H1 (cell line): ENCODE measurements at regions of chr11 and their contacts with region 1.

Region 1: GRCh38 chr11:14454861-14455632 is 44.6 kb downstream of the COPB1 start:
- DNase-seq: peak in 1 of 2 experiments; percentile 52
- H3K4me3 ChIP-seq: no peak overlapping the region
- H3K27ac ChIP-seq: no peak overlapping the region
- H3K4me1 ChIP-seq: no peaks in the 10 kb centered on the region
- H3K27me3 ChIP-seq: no peaks in the 10 kb centered on the region
- CTCF ChIP-seq: peak in 2 of 3 experiments; percentile 35 to 42; a peak in 2 of 4 replicates
- EP300 ChIP-seq: no peak
- POLR2A ChIP-seq: no peak
- RAD21 ChIP-seq: peak; percentile 53 to 65

Region 2: DNA sequence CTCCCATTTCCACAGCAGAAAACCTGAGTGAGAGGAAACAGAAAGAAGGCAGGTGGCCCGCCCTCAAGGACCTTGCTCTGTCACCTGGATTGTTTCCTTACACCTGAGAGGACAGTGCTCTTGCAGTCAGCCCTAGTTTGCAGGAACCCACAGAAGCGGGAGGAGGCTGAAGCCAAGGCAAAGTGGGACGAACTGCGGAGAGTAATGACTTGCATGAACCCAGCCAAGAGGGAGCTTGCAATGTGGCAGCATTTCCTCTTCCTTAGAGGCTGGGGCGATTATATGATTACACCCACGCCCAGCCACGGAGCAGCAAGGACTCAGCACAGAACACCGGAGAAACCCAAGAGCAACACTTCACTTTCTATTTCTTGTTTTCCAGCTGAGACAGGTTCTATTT is 389.9 kb before region 1 on chr11:
- CTCF ChIA-PET with region 1: no interaction called
- POLR2A ChIA-PET with region 1: no interaction called
- DNase-seq: no peak
- H3K4me3 ChIP-seq: no peak overlapping the region
- H3K27ac ChIP-seq: no peak overlapping the region
- H3K4me1 ChIP-seq: peaks cover 0 to 3% (median 1%) of the 10 kb centered on the region in 4 experiments; a peak in 2 of 7 replicates
- H3K27me3 ChIP-seq: no peaks in the 10 kb centered on the region
- CTCF ChIP-seq: no peak
- EP300 ChIP-seq: no peak
- POLR2A ChIP-seq: no peak
- RAD21 ChIP-seq: no peak

Region 3: DNA sequence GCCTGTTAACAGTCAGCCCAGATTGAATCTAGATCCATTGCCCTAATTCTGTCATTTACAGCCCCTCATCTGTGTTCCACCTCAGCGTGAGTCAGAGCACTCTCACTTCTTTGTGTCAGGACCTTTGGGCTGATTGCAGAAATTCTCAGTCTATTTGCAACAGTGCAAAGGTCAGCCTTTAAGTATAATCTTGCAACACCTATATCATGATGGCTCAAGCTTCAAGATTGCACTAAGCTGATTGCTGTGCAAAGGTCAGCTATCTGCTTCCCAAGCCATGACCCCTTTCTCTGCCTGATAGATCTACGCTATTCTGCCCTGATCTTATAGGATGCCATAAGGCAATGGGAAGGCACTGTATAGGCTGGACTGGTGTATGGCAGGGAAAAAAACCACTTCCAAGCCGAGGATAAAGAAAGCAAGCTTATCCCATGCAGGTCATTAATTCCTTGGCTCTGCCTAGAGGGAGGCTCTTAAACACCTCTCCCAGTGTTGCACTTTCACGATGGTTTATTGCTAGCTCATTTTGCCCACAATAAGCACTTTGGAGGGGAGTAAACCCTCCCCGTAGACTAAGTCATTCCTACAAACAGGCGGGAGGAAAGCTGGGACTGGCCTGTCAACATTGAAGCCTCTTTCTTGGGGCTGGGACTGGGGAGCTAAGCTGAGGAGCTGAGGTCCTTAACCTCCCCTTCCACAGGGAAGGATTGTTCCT is 196.7 kb before region 1 on chr11:
- CTCF ChIA-PET with region 1: interaction called, 11 read pairs
- POLR2A ChIA-PET with region 1: interaction called, 4 read pairs
- DNase-seq: peak in 1 of 2 experiments; percentile 40
- H3K4me3 ChIP-seq: no peak overlapping the region
- H3K27ac ChIP-seq: no peak overlapping the region
- H3K4me1 ChIP-seq: no peaks in the 10 kb centered on the region; a peak in 1 of 7 replicates
- H3K27me3 ChIP-seq: no peaks in the 10 kb centered on the region
- CTCF ChIP-seq: no peak
- EP300 ChIP-seq: no peak
- POLR2A ChIP-seq: no peak
- RAD21 ChIP-seq: no peak

Region 4: DNA sequence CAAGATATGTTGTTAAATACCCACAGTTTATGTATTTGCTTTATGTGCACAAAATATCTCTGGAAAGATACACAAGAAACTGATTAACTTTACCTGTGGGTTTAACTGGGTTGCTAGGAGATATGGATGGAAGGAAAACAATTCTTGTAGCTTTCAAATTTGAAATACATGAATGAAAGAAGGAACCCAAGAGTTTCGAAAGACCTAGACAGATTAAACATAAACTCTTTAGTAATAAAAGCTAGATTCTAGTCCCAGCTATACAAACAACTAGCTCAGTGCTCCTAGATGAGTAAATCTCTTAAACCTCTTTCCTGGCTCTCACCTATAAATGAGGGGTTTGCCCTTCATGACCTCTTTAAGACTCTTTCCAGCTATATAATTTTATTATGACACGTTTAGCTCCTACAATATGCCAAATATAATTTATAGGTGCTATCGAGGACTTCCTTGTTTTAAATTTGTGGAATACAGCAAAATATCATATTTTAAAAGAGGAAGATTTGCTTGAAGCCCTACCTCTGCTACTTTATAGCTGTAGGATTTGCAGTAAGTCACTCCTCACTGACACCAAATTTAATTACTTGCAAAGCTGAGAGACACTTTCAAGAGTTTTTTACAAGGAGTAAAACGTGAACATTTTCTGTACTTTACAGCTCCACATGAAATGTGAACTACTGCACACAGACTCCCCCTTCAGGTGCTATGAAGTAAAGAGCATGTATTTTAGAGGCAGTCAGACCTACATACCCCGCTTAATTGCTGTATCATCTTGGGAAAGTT is 146.7 kb before region 1 on chr11:
- CTCF ChIA-PET with region 1: interaction called, 127 read pairs
- POLR2A ChIA-PET with region 1: no interaction called
- DNase-seq: no peak
- H3K4me3 ChIP-seq: no peak overlapping the region
- H3K27ac ChIP-seq: no peak overlapping the region
- H3K4me1 ChIP-seq: peaks cover 0 to 24% (median 7%) of the 10 kb centered on the region in 4 experiments; a peak in 6 of 7 replicates
- H3K27me3 ChIP-seq: no peaks in the 10 kb centered on the region
- CTCF ChIP-seq: peak in 2 of 3 experiments; percentile 29 to 69; a peak in 2 of 4 replicates
- EP300 ChIP-seq: no peak
- POLR2A ChIP-seq: no peak
- RAD21 ChIP-seq: peak in 1 of 2 experiments; percentile 36; a peak in 2 of 4 replicates

Region 5: GRCh38 chr11:14422052-14422813 is 32.8 kb before region 1 on chr11:
- CTCF ChIA-PET with region 1: interaction called, 82 read pairs
- POLR2A ChIA-PET with region 1: interaction called, 3 read pairs
- DNase-seq: peak; percentile 67 to 90
- H3K4me3 ChIP-seq: peak overlapping the region in 2 of 4 experiments; percentile 10 to 37; a peak in 4 of 8 replicates
- H3K27ac ChIP-seq: no peak overlapping the region
- H3K4me1 ChIP-seq: peaks cover 7 to 12% (median 9%) of the 10 kb centered on the region in 4 experiments
- H3K27me3 ChIP-seq: no peaks in the 10 kb centered on the region
- CTCF ChIP-seq: no peak
- EP300 ChIP-seq: no peak
- POLR2A ChIP-seq: no peak
- RAD21 ChIP-seq: 0 out of 4 replicates have a peak, but pooled peaks of 1 of the 2 experiments have one; percentile 7

Region 6: DNA sequence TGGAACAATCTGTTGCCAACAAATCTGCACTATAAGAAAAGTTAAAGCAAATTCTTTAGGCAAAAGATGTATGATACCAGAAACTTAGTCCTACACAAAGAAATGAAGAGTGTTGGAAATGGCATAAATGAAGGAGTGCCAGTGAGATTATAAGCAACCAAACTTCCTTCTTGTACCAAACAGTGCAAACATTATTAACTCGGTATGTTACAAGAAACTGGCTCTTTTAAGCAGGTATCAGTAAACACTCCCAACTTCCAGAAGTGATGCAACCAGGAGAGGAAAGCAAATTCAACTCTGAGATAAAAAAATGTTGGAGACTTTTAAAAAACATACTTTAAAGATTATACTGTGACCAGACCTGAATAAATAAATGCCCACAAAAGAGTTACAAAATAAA is 16.1 kb after region 1 on chr11:
- CTCF ChIA-PET with region 1: interaction called, 33 read pairs
- POLR2A ChIA-PET with region 1: interaction called, 3 read pairs
- DNase-seq: no peak
- H3K4me3 ChIP-seq: no peak overlapping the region
- H3K27ac ChIP-seq: no peak overlapping the region
- H3K4me1 ChIP-seq: no peaks in the 10 kb centered on the region
- H3K27me3 ChIP-seq: no peaks in the 10 kb centered on the region
- CTCF ChIP-seq: no peak
- EP300 ChIP-seq: no peak
- POLR2A ChIP-seq: no peak
- RAD21 ChIP-seq: no peak